ENCODE measurements at regions of chr17 and their contacts with region 1.

Region 1: GRCh38 chr17:38379438-38379837 is 27.8 kb downstream of the SOCS7 start:
- DNase-seq: no peak
- H3K4me3 ChIP-seq: no peak overlapping the region
- H3K27ac ChIP-seq: no peak overlapping the region
- H3K4me1 ChIP-seq: no peaks in the 10 kb centered on the region
- H3K27me3 ChIP-seq: no peaks in the 10 kb centered on the region
- CTCF ChIP-seq: no peak
- EP300 ChIP-seq: no peak
- POLR2A ChIP-seq: no peak
- RAD21 ChIP-seq: no peak

Region 2: GRCh38 chr17:38358586-38359513 is 20.6 kb before region 1 on chr17:
- CTCF ChIA-PET with region 1: interaction called, 17 read pairs
- POLR2A ChIA-PET with region 1: interaction called, 4 read pairs
- DNase-seq: no peak
- H3K4me3 ChIP-seq: no peak overlapping the region
- H3K27ac ChIP-seq: no peak overlapping the region
- H3K4me1 ChIP-seq: peaks cover 0 to 4% (median 2%) of the 10 kb centered on the region in 4 experiments; a peak in 2 of 7 replicates
- H3K27me3 ChIP-seq: no peaks in the 10 kb centered on the region
- CTCF ChIP-seq: no peak
- EP300 ChIP-seq: no peak
- POLR2A ChIP-seq: no peak
- RAD21 ChIP-seq: no peak

Region 3: DNA sequence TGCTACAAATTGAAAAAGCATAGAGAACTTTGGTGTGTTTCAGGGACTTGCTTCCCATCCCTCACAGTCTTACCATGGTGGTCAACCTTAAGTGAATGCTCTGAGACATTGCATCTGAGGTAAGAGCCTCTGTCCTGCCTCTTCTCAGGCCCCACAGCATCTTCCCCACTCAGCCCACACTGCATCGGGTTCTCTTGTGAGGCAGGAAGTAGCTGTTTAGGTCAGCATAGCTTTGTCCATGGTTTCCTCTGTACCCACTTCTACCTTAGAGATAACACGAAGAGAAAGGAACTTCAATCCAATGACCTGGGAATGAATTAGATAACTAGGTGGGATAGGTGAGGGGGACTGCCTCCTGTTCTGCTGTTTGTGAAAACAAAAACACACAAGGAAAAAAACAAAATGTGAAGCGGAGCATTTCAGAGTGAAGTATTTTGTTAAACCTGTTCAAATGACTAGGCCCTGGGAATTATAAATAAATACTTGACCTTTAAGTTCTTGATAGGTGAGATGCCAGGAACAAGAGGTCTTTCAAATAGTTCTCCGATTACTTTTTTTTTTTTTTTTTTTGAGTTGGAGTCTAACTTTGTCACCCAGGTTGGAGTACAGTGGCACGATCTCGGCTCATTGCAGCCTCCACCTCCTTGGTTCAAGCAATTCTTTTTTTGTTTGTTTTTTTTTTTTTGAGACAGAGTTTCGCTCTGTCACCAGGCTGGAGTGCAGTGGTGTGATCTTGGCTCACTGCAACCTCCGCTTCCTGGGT is 10.1 kb before region 1 on chr17:
- CTCF ChIA-PET with region 1: interaction called, 17 read pairs
- POLR2A ChIA-PET with region 1: no interaction called
- DNase-seq: no peak
- H3K4me3 ChIP-seq: no peak overlapping the region
- H3K27ac ChIP-seq: no peak overlapping the region
- H3K4me1 ChIP-seq: no peaks in the 10 kb centered on the region
- H3K27me3 ChIP-seq: no peaks in the 10 kb centered on the region
- CTCF ChIP-seq: no peak
- EP300 ChIP-seq: no peak
- POLR2A ChIP-seq: no peak
- RAD21 ChIP-seq: no peak

Region 4: GRCh38 chr17:38403491-38403890 is 24.1 kb after region 1 on chr17:
- CTCF ChIA-PET with region 1: interaction called, 10 read pairs
- POLR2A ChIA-PET with region 1: interaction called, 3 read pairs
- DNase-seq: no peak
- H3K4me3 ChIP-seq: peak overlapping the region in 1 of 4 experiments; percentile 23; a peak in 1 of 8 replicates
- H3K27ac ChIP-seq: no peak overlapping the region; the same call in 1 of the 2 replicates
- H3K4me1 ChIP-seq: peaks cover 13 to 27% (median 19%) of the 10 kb centered on the region in 4 experiments
- H3K27me3 ChIP-seq: no peaks in the 10 kb centered on the region
- CTCF ChIP-seq: no peak
- EP300 ChIP-seq: no peak
- POLR2A ChIP-seq: no peak
- RAD21 ChIP-seq: no peak

Region 5: GRCh38 chr17:38498186-38498752 is 118.8 kb after region 1 on chr17:
- CTCF ChIA-PET with region 1: no interaction called
- POLR2A ChIA-PET with region 1: no interaction called
- DNase-seq: no peak
- H3K4me3 ChIP-seq: no peak overlapping the region
- H3K27ac ChIP-seq: no peak overlapping the region
- H3K4me1 ChIP-seq: no peaks in the 10 kb centered on the region; a peak in 1 of 7 replicates
- H3K27me3 ChIP-seq: no peaks in the 10 kb centered on the region
- CTCF ChIP-seq: peak; percentile 20 to 40 (median 32); a peak in 3 of 4 replicates
- EP300 ChIP-seq: no peak
- POLR2A ChIP-seq: no peak
- RAD21 ChIP-seq: peak in 1 of 2 experiments; percentile 17; a peak in 1 of 4 replicates

Measured in H1 (cell line).